BJ (cell line): ENCODE measurements at regions of chr2 and their contacts with region 1.

Region 1: GRCh38 chr2:20097879-20098714 is 46.7 kb upstream of the LAPTM4A start:
- DNase-seq: no peak
- H3K4me3 ChIP-seq: no peak overlapping the region
- H3K27me3 ChIP-seq: no peaks in the 10 kb centered on the region; the same call in 1 of the 2 replicates
- CTCF ChIP-seq: peak; percentile 93

Region 2: DNA sequence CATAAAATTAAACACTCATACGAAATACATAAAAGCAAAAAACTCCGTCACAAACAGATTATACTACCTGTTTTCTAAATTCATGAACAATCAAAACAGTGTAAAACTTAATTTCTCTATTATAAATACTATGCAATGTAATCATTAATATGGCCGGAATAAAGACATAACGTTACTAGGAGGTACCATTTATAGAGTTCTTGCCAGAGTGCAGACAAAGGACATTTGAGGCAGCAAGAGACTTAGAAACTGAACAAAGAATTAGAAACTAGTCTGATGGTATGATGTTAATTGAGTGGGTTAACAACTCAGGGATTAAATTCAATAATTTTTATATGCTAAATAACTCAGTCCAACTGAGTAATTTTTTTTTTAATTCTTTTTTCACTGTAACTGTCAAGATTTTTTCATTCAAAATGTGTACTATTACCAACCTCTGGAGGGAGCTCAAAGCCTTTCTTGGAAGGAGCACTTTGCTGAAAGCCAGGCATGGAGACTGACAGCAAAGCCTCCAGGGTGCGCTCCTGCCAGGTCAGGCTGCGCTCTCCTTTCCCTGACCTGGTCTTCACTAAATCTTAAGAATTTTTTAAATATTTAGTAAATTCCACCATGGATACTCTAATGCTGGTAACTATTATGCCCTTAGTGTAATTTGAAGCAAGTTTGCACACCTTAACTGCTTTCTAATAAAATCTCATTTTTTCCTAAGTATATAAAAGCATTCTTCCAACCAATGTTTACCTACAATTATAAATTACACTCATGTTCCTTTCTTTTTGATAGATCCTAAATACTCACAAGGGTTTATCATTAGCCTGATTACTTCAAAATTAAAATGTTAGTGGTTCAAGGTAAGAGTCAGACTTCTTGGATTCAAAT is 142.3 kb before region 1 on chr2:
- CTCF ChIA-PET with region 1: interaction called, 22 read pairs
- POLR2A ChIA-PET with region 1: no interaction called
- DNase-seq: no peak
- H3K4me3 ChIP-seq: no peak overlapping the region
- H3K27me3 ChIP-seq: no peaks in the 10 kb centered on the region
- CTCF ChIP-seq: peak; percentile 85

Region 3: DNA sequence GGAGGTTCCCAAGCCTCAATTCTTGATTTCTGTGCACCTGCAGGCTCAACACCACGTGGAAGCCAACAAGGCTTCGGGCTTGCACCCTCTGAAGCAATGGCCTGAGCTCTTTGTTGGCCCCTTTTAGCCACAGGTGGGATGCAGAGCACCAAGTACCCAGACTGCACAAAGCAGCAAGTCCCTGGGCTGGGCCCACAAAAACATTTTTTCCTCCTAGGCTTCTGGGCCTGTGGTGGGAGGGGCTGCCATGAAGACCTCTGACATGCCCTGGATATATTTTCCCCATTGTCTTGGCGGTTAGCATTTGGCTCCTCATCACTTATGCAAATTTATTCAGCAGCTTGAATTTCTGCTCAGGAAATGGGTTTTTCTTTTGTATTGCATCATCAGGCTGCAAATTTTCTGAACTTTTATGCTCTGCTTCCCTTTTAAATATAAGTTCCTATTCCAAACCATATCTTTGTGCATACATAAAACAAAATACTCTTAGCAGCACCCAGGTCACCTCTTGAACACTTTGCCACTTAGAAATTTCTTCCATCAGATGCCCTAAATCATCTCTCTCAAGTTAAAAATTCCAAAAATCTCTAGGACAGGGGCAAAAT is 76.6 kb before region 1 on chr2:
- CTCF ChIA-PET with region 1: interaction called, 157 read pairs
- POLR2A ChIA-PET with region 1: interaction called, 3 read pairs
- DNase-seq: no peak
- H3K4me3 ChIP-seq: no peak overlapping the region
- H3K27me3 ChIP-seq: no peaks in the 10 kb centered on the region; the same call in 1 of the 2 replicates
- CTCF ChIP-seq: no peak

Region 4: DNA sequence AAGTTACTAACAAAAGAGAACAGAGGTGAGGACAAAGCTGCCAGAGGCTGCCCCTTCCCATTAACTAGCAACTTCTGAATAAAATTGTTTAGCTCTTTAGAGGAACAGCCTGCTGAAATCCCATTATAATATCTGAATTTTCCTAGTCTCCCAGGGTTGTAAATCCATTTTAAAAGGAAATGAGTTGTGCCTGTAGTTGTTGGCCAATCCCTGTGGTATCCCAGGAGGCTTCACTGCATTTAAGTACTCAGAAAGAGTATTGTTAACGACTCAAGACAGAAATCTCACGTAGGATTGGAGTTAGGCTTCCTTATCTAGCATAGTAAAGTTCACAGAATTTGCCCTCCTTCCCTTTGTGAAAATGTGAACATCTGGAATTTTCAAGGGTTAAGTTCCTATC is 55.6 kb before region 1 on chr2:
- CTCF ChIA-PET with region 1: interaction called, 11 read pairs
- POLR2A ChIA-PET with region 1: no interaction called
- DNase-seq: no peak
- H3K4me3 ChIP-seq: no peak overlapping the region
- H3K27me3 ChIP-seq: no peaks in the 10 kb centered on the region
- CTCF ChIP-seq: no peak

Region 5: GRCh38 chr2:20051532-20052228 is 46.4 kb before region 1 on chr2 and contains the start of gene LAPTM4A:
- CTCF ChIA-PET with region 1: interaction called, 10 read pairs
- POLR2A ChIA-PET with region 1: interaction called, 3 read pairs
- DNase-seq: peak; percentile 99
- H3K4me3 ChIP-seq: peak within 1 kb of the TSS; percentile 95
- H3K27me3 ChIP-seq: no peaks in the 10 kb centered on the region
- CTCF ChIP-seq: no peak
- polyA plus RNA-seq, gene LAPTM4A: 379 and 855 TPM in 2 replicates

Region 6: DNA sequence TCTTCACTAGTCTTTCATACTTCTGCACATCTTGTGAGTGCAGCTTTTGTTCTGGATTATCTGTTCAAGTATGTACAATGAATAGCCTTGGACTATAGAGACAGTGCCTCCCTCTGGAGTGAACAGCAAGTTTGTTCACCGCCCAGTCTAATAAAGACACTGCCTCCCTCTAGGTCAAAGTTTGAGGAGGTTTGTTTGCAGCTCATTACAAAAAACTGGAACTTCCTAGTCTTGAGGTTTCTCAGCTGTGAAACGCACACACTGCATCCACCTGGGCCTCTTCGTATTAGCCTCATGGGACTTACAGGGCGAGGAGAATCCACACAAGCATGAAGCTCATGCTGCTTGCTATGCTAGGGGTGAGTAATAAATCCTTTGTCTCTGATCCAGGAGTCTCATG is 20.6 kb before region 1 on chr2:
- CTCF ChIA-PET with region 1: interaction called, 11 read pairs
- POLR2A ChIA-PET with region 1: no interaction called
- DNase-seq: no peak
- H3K4me3 ChIP-seq: no peak overlapping the region
- H3K27me3 ChIP-seq: no peaks in the 10 kb centered on the region
- CTCF ChIP-seq: no peak